Transverse colon (tissue), 4 donors: ENCODE measurements at regions of chr13 and their contacts with region 1.

Region 1: DNA sequence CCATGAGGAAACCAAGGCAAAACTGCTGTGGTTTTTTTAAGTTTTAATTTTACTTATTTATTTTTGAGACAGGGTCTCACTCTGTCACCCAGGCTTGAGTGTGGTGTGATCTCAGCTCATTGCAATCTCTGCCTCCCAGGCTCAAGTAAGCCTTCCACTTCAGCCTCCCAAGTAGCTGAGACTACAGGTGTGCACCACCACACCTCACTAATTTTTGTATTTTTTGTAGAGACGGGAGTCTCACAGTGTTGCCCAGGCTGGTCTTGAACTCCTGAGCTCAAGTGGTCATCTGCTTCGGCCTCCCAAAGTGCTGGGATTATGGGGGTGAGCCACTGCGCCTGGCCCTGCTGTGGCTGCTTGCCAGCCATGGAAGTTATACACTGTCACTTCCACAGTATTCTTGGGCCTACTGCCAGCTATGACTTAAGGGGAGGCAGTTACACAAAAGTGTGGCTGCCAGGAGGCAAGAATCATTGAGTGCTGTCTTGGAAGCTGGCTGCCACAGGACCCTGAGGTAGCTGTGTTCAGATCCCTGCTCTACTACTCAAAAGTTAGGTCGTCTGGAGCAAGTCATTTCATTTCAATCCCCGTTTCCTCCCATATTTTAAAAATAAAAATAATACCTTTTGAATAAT is 12.7 kb downstream of the FARP1 start:
- DNase-seq: no peak
- H3K4me3 ChIP-seq: no peak overlapping the region
- H3K27ac ChIP-seq: no peak overlapping the region
- H3K4me1 ChIP-seq: no peaks in the 10 kb centered on the region
- H3K27me3 ChIP-seq: no peaks in the 10 kb centered on the region
- CTCF ChIP-seq: no peak
- EP300 ChIP-seq: no peak
- POLR2A ChIP-seq: no peak

Region 2: GRCh38 chr13:98411681-98412201 is 256.1 kb after region 1 on chr13:
- in situ Hi-C with region 1: loop called in 1 of 4 experiments (anchors 10 kb)
- intact Hi-C with region 1: no loop called
- DNase-seq: peak; percentile 20
- H3K4me3 ChIP-seq: no peak overlapping the region
- H3K27ac ChIP-seq: no peak overlapping the region
- H3K4me1 ChIP-seq: peaks cover 2 to 9% (median 9%) of the 10 kb centered on the region in 4 donors
- H3K27me3 ChIP-seq: no peaks in the 10 kb centered on the region
- CTCF ChIP-seq: no peak
- EP300 ChIP-seq: no peak
- POLR2A ChIP-seq: no peak